HCT116 (cell line): ENCODE measurements at regions of chr10 and their contacts with region 1.

Region 1: GRCh38 chr10:18214691-18215563 is 74.7 kb downstream of the CACNB2 start:
- DNase-seq: no peak
- ATAC-seq: peak; percentile 87
- H3K4me3 ChIP-seq: no peak overlapping the region
- H3K27ac ChIP-seq: no peak overlapping the region
- H3K4me1 ChIP-seq: no peaks in the 10 kb centered on the region
- H3K27me3 ChIP-seq: no peaks in the 10 kb centered on the region
- CTCF ChIP-seq: peak; percentile 59 to 86 (median 82); a peak in 5 of 6 replicates
- POLR2A ChIP-seq: no peak
- RAD21 ChIP-seq: peak; percentile 77

Region 2: DNA sequence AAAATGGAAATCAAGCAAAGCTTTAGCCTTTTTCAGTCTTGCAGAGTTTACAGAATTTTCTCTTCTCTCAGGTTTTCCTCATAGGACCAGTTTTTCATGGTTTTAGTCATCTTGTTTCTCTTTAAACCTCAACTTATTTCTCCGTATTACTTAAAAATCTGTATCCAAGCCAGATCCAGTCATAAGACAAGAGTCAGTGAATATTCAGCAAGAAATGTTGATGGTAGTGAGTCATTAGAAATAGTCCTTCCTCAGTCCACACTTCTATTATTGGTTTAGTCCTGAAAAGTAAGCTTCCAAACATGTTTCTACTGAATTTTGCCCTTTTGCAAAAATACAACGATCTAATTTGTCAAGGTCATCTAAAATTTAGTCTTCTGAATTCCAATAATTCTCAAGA is 879.9 kb before region 1 on chr10:
- CTCF ChIA-PET with region 1: no interaction called
- POLR2A ChIA-PET with region 1: no interaction called
- RAD21 ChIA-PET with region 1: no interaction called
- intact Hi-C with region 1: no loop called
- DNase-seq: no peak
- ATAC-seq: no peak
- H3K4me3 ChIP-seq: no peak overlapping the region
- H3K27ac ChIP-seq: no peak overlapping the region
- H3K4me1 ChIP-seq: no peaks in the 10 kb centered on the region
- H3K27me3 ChIP-seq: no peaks in the 10 kb centered on the region
- CTCF ChIP-seq: no peak
- POLR2A ChIP-seq: no peak
- RAD21 ChIP-seq: no peak

Region 3: DNA sequence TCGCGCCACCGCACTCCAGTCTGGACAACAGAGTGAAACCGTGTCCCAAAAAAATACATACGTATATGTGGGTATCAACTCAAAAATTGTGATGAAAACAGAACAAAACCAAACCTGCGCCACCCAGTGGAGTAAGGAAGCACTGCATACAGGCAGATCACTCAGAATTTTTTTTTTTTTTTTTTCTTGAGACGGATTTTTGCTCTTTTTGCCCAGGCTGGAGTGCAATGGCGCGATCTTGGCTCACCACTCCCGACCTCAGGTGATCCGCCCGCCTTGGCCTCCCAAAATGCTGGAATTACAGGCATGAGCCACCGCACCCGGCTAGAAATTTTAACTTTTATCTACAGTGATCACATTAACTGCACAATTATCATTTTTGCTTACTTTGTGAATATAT is 472.0 kb before region 1 on chr10:
- CTCF ChIA-PET with region 1: no interaction called
- POLR2A ChIA-PET with region 1: no interaction called
- RAD21 ChIA-PET with region 1: no interaction called
- intact Hi-C with region 1: loop called (anchors 5 kb)
- DNase-seq: peak; percentile 49
- ATAC-seq: peak; percentile 74
- H3K4me3 ChIP-seq: peak overlapping the region; percentile 9 to 28; a peak in 2 of 4 replicates
- H3K27ac ChIP-seq: no peak overlapping the region
- H3K4me1 ChIP-seq: peaks cover 0 to 10% of the 10 kb centered on the region in 2 experiments; a peak in 2 of 4 replicates
- H3K27me3 ChIP-seq: no peaks in the 10 kb centered on the region
- CTCF ChIP-seq: peak; percentile 59 to 78 (median 71); a peak in 5 of 6 replicates
- POLR2A ChIP-seq: no peak
- RAD21 ChIP-seq: peak; percentile 63

Region 4: DNA sequence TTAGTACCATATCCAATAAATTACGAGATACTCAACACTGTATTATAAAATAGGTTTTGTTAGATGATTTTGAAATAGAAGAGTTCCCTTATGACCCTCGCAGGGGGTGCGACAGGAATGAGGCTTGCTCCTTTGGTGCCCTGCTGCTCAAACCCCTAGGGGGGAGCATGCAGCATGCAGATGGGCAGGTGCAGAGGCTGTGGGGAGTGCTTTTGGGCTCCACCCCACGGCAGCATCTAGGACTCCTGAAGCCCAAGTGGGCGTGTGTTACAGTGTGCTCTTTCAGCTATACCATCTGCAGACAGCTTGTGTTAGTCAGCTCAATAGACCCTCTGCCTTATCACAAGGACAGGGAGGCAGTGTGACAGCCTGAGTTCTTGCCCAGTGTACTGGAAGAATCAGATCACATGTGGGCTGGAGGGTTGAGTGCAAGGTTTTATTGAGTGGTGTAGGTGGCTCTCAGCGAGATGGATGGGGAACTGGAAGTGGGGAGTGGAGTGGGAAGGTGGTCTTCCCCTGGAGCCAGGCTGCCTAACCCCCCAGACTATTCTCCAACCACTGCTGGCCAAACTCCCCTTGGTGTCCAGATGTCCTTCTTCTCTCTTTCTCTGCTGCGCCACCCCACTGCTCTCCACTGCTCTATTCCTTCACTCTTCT is 408.9 kb before region 1 on chr10:
- CTCF ChIA-PET with region 1: interaction called, 6 read pairs
- POLR2A ChIA-PET with region 1: no interaction called
- RAD21 ChIA-PET with region 1: no interaction called
- intact Hi-C with region 1: loop called (anchors 1 kb)
- DNase-seq: peak; percentile 29
- ATAC-seq: peak; percentile 100
- H3K4me3 ChIP-seq: no peak overlapping the region
- H3K27ac ChIP-seq: no peak overlapping the region
- H3K4me1 ChIP-seq: no peaks in the 10 kb centered on the region
- H3K27me3 ChIP-seq: no peaks in the 10 kb centered on the region
- CTCF ChIP-seq: peak; percentile 63 to 72 (median 65)
- POLR2A ChIP-seq: no peak
- RAD21 ChIP-seq: peak; percentile 69

Region 5: GRCh38 chr10:17910125-17910789 is 304.7 kb before region 1 on chr10:
- CTCF ChIA-PET with region 1: interaction called, 5 read pairs
- POLR2A ChIA-PET with region 1: no interaction called
- RAD21 ChIA-PET with region 1: no interaction called
- intact Hi-C with region 1: loop called (anchors 2 kb)
- DNase-seq: peak; percentile 46
- ATAC-seq: peak; percentile 94
- H3K4me3 ChIP-seq: no peak overlapping the region
- H3K27ac ChIP-seq: no peak overlapping the region
- H3K4me1 ChIP-seq: no peaks in the 10 kb centered on the region
- H3K27me3 ChIP-seq: 0 out of 2 replicates have a peak, but pooled peaks cover 6% of the 10 kb centered on the region
- CTCF ChIP-seq: peak; percentile 53 to 77 (median 59); a peak in 5 of 6 replicates
- POLR2A ChIP-seq: no peak
- RAD21 ChIP-seq: peak; percentile 68

Region 6: GRCh38 chr10:18583575-18584270 is 368.8 kb after region 1 on chr10:
- CTCF ChIA-PET with region 1: no interaction called
- POLR2A ChIA-PET with region 1: no interaction called
- RAD21 ChIA-PET with region 1: no interaction called
- intact Hi-C with region 1: no loop called
- DNase-seq: no peak
- ATAC-seq: no peak
- H3K4me3 ChIP-seq: no peak overlapping the region
- H3K27ac ChIP-seq: no peak overlapping the region
- H3K4me1 ChIP-seq: no peaks in the 10 kb centered on the region
- H3K27me3 ChIP-seq: no peaks in the 10 kb centered on the region
- CTCF ChIP-seq: peak in 2 of 3 experiments; percentile 3 to 35; a peak in 2 of 6 replicates
- POLR2A ChIP-seq: no peak
- RAD21 ChIP-seq: no peak